ENCODE measurements at regions of chr1 and their contacts with region 1.

Region 1: GRCh38 chr1:1059494-1060280 is 14.4 kb downstream of the RNF223 start:
- DNase-seq: no peak
- H3K4me3 ChIP-seq: peak overlapping the region; percentile 32 to 78 (median 48)
- H3K27ac ChIP-seq: no peak overlapping the region
- H3K4me1 ChIP-seq: peaks cover 32 to 62% (median 36%) of the 10 kb centered on the region in 3 donors
- H3K27me3 ChIP-seq: peaks cover 9 to 82% (median 30%) of the 10 kb centered on the region in 4 donors
- CTCF ChIP-seq: no peak
- POLR2A ChIP-seq: no peak

Region 2: GRCh38 chr1:983799-984473 is 75.8 kb before region 1 on chr1:
- intact Hi-C with region 1: loop called (anchors 5 kb)
- DNase-seq: no peak
- H3K4me3 ChIP-seq: peak overlapping the region in 1 of 4 donors; percentile 28
- H3K27ac ChIP-seq: no peak overlapping the region
- H3K4me1 ChIP-seq: peaks cover 0 to 24% (median 0%) of the 10 kb centered on the region in 3 donors
- H3K27me3 ChIP-seq: peaks cover 0 to 76% (median 3%) of the 10 kb centered on the region in 4 donors
- CTCF ChIP-seq: peak; percentile 54 to 96 (median 68)
- POLR2A ChIP-seq: no peak

Region 3: DNA sequence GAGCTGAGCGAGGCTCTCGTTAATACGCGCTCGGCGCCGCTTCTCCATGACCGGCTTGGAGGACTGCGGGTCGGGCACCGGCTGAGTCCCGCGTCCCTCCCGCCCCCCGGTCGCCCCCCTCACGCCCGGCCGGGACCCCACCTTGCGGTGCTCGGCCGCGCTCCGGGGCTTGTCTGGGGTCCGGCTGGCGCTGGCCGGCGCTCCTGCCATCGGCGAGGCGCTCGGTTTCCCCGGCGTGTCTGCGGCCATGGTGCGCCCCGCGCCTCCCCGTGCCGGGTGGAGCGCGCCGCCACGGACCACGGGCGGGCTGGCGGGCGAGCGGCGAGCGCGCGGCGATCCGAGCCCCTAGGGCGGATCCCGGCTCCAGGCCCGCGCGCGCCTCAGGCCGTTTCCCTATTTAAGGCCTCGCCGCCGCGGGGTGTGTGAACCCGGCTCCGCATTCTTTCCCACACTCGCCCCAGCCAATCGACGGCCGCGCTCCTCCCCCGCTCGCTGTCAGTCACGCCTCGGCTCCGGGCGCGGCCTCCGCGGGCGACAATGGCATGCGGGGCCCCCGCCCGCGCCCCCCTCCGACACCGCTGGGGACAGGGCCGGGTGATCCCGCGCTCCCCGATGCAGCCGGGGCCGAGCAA is 59.8 kb before region 1 on chr1 and contains the start of gene HES4:
- intact Hi-C with region 1: no loop called
- DNase-seq: no peak
- H3K4me3 ChIP-seq: peak within 1 kb of the TSS; percentile 59 to 78 (median 68)
- H3K27ac ChIP-seq: peak within 1 kb of the TSS; percentile 91 to 97 (median 94)
- H3K4me1 ChIP-seq: peaks cover 15 to 62% (median 38%) of the 10 kb centered on the region in 3 donors
- H3K27me3 ChIP-seq: peaks cover 0 to 96% (median 3%) of the 10 kb centered on the region in 4 donors
- CTCF ChIP-seq: peak in 1 of 6 experiments; percentile 8
- POLR2A ChIP-seq: peak in 2 of 4 donors; percentile 82 to 91
- total RNA-seq, gene HES4: 15.1 to 16.2 (median 15.3) TPM

Region 4: DNA sequence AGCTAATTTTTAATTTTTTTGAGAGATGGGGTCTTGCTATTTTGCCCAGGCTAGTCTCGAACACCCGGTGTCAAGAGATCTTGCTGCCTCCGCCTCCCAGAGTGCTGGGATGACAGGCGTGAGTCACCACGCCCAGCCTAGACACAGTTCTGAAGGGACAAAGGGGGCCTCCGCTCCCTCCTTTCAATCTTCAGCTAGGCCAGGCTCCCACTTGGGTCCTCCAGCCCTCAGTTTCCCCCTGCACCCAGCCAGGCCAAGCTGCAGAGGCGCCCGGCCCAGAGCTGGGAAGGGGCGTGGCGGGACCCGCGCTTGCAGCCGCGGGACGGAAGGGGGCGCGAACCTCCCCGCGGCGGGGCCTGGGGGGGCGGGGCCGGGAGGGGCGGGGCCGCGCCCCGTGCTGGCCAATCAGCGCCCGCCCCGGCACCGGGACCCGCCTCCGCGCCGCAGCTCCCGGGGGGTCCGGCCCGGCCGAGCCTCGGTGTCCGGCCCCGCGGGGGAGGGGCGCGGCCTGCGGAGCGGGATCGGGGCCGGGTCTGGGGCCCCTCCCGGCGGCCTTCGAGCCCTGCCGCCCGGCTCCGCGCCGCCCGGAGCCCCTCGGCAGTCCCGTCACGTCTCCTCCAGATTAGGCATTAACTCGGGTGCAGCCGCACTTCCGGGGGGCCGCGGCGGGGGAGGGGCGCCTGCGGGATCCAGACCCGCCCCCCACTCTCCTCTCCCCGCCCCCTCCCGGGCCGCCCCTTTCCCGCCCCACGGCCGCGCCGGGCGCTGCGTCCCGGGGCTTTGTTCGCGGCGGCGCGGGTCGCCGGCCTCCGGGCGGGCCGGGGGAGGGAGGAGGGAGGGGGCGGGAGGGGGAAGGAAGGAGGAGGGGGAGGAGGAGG is 40.3 kb before region 1 on chr1:
- intact Hi-C with region 1: no loop called
- DNase-seq: no peak
- H3K4me3 ChIP-seq: peak overlapping the region; percentile 65 to 90 (median 82)
- H3K27ac ChIP-seq: peak overlapping the region; percentile 87 to 97 (median 96)
- H3K4me1 ChIP-seq: peaks cover 28 to 58% (median 31%) of the 10 kb centered on the region in 3 donors
- H3K27me3 ChIP-seq: peaks cover 0 to 11% (median 0%) of the 10 kb centered on the region in 4 donors
- CTCF ChIP-seq: peak in 5 of 6 experiments; percentile 19 to 53 (median 30)
- POLR2A ChIP-seq: peak in 1 of 4 donors; percentile 18

Region 5: GRCh38 chr1:1399187-1399871 is 339.6 kb after region 1 on chr1 and contains the start of gene CCNL2:
- intact Hi-C with region 1: no loop called
- DNase-seq: peak; percentile 94
- H3K4me3 ChIP-seq: peak within 1 kb of the TSS; percentile 91 to 99 (median 97)
- H3K27ac ChIP-seq: peak within 1 kb of the TSS; percentile 88 to 94 (median 92)
- H3K4me1 ChIP-seq: peaks cover 22 to 66% (median 23%) of the 10 kb centered on the region in 3 donors
- H3K27me3 ChIP-seq: no peaks in the 10 kb centered on the region
- CTCF ChIP-seq: peak; percentile 56 to 80 (median 76)
- POLR2A ChIP-seq: peak in 2 of 4 donors; percentile 51 to 64
- total RNA-seq, gene CCNL2: 42.5 to 213 (median 104) TPM

Measured in esophagus squamous epithelium (tissue), 5 donors.